Dendritic cell treated with granulocyte-macrophage colony-stimulating factor and Interleukin-4, amounts not matched to agents 40 ng/mL and 50 ng/mL, for 4 days (primary cell): ENCODE measurements at regions of chr2 and their contacts with region 1.

Region 1: GRCh38 chr2:175282290-175282689 is 100.8 kb upstream of the ATP5MC3 start:
- H3K4me3 Mint-ChIP-seq: no peak overlapping the region
- H3K27ac Mint-ChIP-seq: no peak overlapping the region
- H3K4me1 Mint-ChIP-seq: no peaks in the 10 kb centered on the region
- H3K27me3 Mint-ChIP-seq: peaks cover 9% of the 10 kb centered on the region

Region 2: GRCh38 chr2:174699993-174700766 is 582.1 kb before region 1 on chr2:
- intact Hi-C with region 1: loop called (anchors 5 kb)
- H3K4me3 Mint-ChIP-seq: no peak overlapping the region
- H3K27ac Mint-ChIP-seq: no peak overlapping the region
- H3K4me1 Mint-ChIP-seq: peaks cover 19% of the 10 kb centered on the region
- H3K27me3 Mint-ChIP-seq: peaks cover 16% of the 10 kb centered on the region

Region 3: DNA sequence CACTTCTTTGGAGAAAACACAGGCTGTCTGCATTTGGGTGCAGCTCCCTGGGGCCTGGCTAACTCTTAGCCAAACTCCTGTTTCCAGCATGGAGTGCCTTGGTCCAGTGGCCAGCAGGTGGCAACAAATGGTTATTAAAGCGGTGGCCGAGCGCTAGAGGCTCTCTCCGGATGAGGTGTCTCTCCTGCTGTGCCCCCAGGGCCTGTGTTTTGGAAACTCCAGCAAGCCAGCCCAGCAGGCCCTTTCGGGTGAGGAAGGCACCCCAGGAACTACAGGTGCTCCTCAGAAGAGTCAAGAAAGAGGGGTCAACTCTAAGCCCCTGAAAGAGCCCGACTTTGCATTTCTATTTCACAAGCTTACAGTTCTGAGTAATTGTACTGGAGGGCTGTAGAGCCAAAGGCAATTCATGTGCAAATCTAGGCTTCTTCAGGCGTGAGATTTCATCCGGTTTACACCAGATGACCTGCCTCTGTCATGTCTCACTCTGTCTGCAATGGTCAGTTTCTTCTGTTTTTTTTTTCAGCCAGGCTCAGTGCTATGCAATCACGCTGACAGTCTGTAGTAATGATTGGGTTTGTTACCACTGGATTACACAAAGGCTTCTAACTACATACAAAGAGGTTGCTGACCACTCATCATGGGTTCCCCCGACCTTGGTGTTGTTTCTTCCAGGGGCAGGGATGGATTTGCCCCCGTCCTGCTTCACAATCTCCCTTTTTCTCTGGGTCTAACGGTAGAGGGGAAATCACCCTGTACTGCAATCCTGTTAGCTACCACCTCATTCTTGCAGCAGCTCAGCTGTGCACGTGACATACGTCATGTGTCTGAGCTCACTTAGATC is 510.4 kb before region 1 on chr2:
- intact Hi-C with region 1: loop called (anchors 5 kb)
- H3K4me3 Mint-ChIP-seq: no peak overlapping the region
- H3K27ac Mint-ChIP-seq: no peak overlapping the region
- H3K4me1 Mint-ChIP-seq: peaks cover 17% of the 10 kb centered on the region
- H3K27me3 Mint-ChIP-seq: peaks cover 26% of the 10 kb centered on the region

Region 4: GRCh38 chr2:175111200-175111657 is 171.1 kb before region 1 on chr2:
- intact Hi-C with region 1: loop called (anchors 2 kb)
- H3K4me3 Mint-ChIP-seq: no peak overlapping the region
- H3K27ac Mint-ChIP-seq: no peak overlapping the region
- H3K4me1 Mint-ChIP-seq: no peaks in the 10 kb centered on the region
- H3K27me3 Mint-ChIP-seq: no peaks in the 10 kb centered on the region